ENCODE measurements at regions of chr3 and their contacts with region 1.

Region 1: GRCh38 chr3:133494469-133494868 is 79.0 kb upstream of the CDV3 start:
- DNase-seq: no peak
- ATAC-seq: peak in 1 of 4 donors; percentile 45
- H3K4me3 ChIP-seq: no peak overlapping the region
- H3K27ac ChIP-seq: no peak overlapping the region
- H3K4me1 ChIP-seq: no peaks in the 10 kb centered on the region
- H3K27me3 ChIP-seq: no peaks in the 10 kb centered on the region
- CTCF ChIP-seq: peak in 1 of 4 donors; percentile 10

Region 2: GRCh38 chr3:133561679-133562078 is 67.2 kb after region 1 on chr3:
- intact Hi-C with region 1: no loop called
- DNase-seq: no peak
- ATAC-seq: no peak
- H3K4me3 ChIP-seq: no peak overlapping the region
- H3K27ac ChIP-seq: no peak overlapping the region
- H3K4me1 ChIP-seq: no peaks in the 10 kb centered on the region
- H3K27me3 ChIP-seq: no peaks in the 10 kb centered on the region
- CTCF ChIP-seq: no peak

Region 3: DNA sequence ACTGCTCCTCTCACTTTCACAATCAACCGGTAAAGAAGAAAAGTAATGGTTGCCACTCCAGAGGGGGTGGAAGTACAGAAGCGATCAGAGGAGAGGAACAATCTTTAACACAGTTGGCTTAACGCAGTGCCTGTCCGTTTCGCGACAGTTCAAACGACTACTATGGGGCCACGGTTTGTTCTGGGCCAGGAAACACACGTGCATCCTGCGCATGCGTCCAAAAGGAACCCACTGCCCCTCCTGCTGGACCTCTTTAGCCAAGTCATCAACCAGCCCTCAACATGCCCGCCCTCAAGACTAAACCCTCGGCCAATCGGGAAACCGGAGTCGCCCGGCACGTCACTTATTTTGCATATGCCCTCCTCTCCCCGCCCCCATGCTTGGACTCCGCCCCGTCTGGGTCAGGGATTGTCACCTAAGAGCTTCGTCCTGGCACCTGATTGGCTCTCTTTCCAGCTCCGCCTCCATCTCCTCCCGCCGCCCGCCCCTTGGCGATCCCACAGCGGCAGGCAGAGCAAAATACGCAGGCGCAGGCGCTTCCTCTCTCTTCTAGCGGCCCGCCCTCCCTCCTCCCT is 78.7 kb after region 1 on chr3:
- intact Hi-C with region 1: loop called in 1 of 3 experiments (anchors 10 kb)
- DNase-seq: peak; percentile 97 to 100 (median 100)
- ATAC-seq: peak; percentile 86 to 93 (median 88)
- H3K4me3 ChIP-seq: peak overlapping the region; percentile 55 to 84 (median 70)
- H3K27ac ChIP-seq: peak overlapping the region; percentile 75 to 98 (median 96)
- H3K4me1 ChIP-seq: peaks cover 17 to 41% (median 28%) of the 10 kb centered on the region in 3 donors
- H3K27me3 ChIP-seq: no peaks in the 10 kb centered on the region
- CTCF ChIP-seq: no peak

Measured in pancreas (tissue), 10 donors.